HepG2 (cell line): ENCODE measurements at regions of chr4 and their contacts with region 1.

Region 1: GRCh38 chr4:25312496-25313200 is at the start of gene ZCCHC4:
- DNase-seq: peak; percentile 77
- ATAC-seq: peak; percentile 93
- H3K4me3 ChIP-seq: peak within 1 kb of the TSS; percentile 79 to 98 (median 96)
- H3K27ac ChIP-seq: peak within 1 kb of the TSS; percentile 92
- H3K4me1 ChIP-seq: peaks cover 46% of the 10 kb centered on the region
- H3K27me3 ChIP-seq: no peaks in the 10 kb centered on the region
- CTCF ChIP-seq: peak; percentile 99
- EP300 ChIP-seq: peak; percentile 57 to 60; a peak in 3 of 4 replicates
- POLR2A ChIP-seq: peak; percentile 79 to 85
- RAD21 ChIP-seq: peak; percentile 78
- total RNA-seq, gene ZCCHC4: 15.0 and 16.9 TPM in 2 replicates

Region 2: DNA sequence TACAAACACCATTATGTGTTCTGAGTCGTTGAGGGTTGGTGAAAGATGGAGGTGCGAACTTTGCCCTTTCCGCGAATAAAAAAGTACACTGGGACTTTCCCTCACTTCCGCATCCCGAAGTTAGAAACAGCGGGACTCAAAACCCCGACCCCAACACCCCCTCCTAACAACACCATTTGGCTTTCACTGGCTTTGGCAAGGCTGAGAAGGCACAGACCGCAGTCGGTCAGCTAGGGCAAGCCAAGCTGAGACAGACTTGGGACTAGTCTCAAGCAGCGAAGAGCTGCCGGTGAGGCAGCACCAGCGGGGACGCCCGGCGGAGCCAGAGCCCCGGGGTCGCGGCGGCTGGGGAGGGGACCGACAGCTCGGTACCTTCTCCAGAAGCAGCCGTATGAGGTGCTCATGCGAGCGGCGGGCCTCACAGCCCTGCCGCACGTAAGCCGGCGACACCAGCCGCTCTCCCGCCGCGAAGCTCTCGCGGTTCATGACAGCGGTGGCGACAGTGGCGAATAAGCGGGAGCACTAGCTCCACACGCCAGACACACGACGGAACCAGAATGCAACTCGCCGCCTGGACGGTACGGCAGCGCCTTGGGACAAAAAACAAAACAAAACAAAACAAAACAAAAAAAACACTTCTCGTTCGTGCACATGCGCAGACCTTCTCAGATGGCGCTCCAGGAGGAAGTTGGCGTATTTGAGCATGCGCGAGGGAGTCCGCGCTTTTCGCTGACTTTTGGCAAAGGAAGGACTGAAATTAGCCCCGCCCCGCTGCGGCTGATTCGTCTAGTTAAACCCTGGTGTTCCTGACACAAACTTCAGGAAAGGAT is 152.5 kb before region 1 on chr4 and contains the start of gene SEPSECS:
- CTCF ChIA-PET with region 1: no interaction called
- POLR2A ChIA-PET with region 1: interaction called, 12 read pairs
- in situ Hi-C with region 1: no loop called
- intact Hi-C with region 1: no loop called
- DNase-seq: peak; percentile 97
- ATAC-seq: peak; percentile 85
- H3K4me3 ChIP-seq: peak within 1 kb of the TSS; percentile 70 to 84 (median 79)
- H3K27ac ChIP-seq: peak within 1 kb of the TSS; percentile 99
- H3K4me1 ChIP-seq: peaks cover 58% of the 10 kb centered on the region
- H3K27me3 ChIP-seq: no peaks in the 10 kb centered on the region; a peak in 1 of 5 replicates
- CTCF ChIP-seq: peak; percentile 30
- EP300 ChIP-seq: peak in 1 of 2 experiments; percentile 29; a peak in 1 of 4 replicates
- POLR2A ChIP-seq: peak; percentile 81 to 91
- RAD21 ChIP-seq: 0 out of 2 replicates have a peak, but pooled peaks have one; percentile 25
- total RNA-seq, gene SEPSECS: 14.3 and 17.1 TPM in 2 replicates

Region 3: GRCh38 chr4:25180524-25181131 is 132.0 kb before region 1 on chr4:
- CTCF ChIA-PET with region 1: interaction called, 6 read pairs
- POLR2A ChIA-PET with region 1: no interaction called
- in situ Hi-C with region 1: no loop called
- intact Hi-C with region 1: loop called (anchors 2 kb)
- DNase-seq: peak; percentile 56
- ATAC-seq: peak; percentile 59
- H3K4me3 ChIP-seq: no peak overlapping the region
- H3K27ac ChIP-seq: no peak overlapping the region
- H3K4me1 ChIP-seq: peaks cover 52% of the 10 kb centered on the region
- H3K27me3 ChIP-seq: no peaks in the 10 kb centered on the region
- CTCF ChIP-seq: peak; percentile 68
- EP300 ChIP-seq: no peak
- POLR2A ChIP-seq: no peak
- RAD21 ChIP-seq: no peak; the same call in 1 of the 2 replicates

Region 4: DNA sequence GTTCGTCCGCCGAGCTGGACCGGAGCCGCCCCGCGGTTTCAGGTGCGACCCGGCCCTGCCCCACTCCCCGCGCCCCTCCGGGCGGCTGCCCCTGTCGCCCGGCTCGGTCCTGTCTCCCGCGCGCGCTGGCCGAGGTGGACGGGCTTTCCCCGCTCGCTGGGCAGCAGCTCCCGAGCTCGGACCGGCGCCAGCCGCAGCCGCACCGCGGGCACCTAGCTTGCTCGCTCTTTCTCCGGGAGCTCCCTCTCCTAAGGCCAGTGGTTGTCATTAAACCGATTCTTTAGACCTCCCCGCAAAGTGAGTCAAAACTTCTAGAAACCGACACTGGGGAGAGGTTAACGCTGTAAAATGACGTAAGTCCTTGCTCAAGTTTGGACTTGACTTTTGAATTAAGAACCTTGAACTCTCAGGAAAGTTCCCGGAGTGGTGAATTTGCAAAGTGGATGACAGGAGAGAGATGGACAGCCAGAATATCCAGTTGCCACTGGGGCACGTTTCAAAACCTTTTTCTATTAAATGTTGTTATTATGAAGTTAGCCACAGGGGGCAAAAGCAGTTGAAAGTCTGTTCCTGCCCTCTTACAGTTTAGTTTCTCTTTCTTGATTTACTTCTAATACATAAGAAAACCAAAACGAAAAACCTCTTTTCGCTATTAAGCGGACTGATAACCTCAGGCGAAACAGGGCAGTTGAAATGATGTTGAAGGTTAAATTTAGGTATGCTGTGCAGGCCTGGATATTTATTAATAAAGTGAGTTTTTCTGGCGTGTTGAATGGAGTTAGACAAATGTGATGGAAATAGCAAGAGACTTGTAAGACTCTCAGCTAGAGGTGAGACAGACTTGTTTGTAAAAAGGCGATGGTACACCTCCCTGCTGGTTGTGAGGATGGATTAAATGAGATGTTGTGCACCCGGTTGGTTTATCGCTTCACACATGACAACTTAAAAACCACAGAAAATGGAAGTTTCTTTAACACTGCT is 78.0 kb before region 1 on chr4:
- CTCF ChIA-PET with region 1: no interaction called
- POLR2A ChIA-PET with region 1: interaction called, 11 read pairs
- in situ Hi-C with region 1: loop called (anchors 5 kb)
- intact Hi-C with region 1: loop called (anchors 2 kb)
- DNase-seq: peak; percentile 89
- ATAC-seq: peak; percentile 79
- H3K4me3 ChIP-seq: peak overlapping the region; percentile 84 to 98 (median 91)
- H3K27ac ChIP-seq: peak overlapping the region; percentile 79
- H3K4me1 ChIP-seq: peaks cover 35% of the 10 kb centered on the region
- H3K27me3 ChIP-seq: no peaks in the 10 kb centered on the region; a peak in 1 of 5 replicates
- CTCF ChIP-seq: peak; percentile 33
- EP300 ChIP-seq: no peak
- POLR2A ChIP-seq: peak in 1 of 2 experiments; percentile 42; a peak in 1 of 4 replicates
- RAD21 ChIP-seq: no peak

Region 5: GRCh38 chr4:25367004-25367621 is 54.5 kb after region 1 on chr4:
- CTCF ChIA-PET with region 1: interaction called, 6 read pairs
- POLR2A ChIA-PET with region 1: interaction called, 6 read pairs
- in situ Hi-C with region 1: no loop called
- intact Hi-C with region 1: loop called (anchors 2 kb)
- DNase-seq: no peak
- ATAC-seq: no peak
- H3K4me3 ChIP-seq: no peak overlapping the region
- H3K27ac ChIP-seq: no peak overlapping the region
- H3K4me1 ChIP-seq: peaks cover 24% of the 10 kb centered on the region
- H3K27me3 ChIP-seq: no peaks in the 10 kb centered on the region
- CTCF ChIP-seq: peak; percentile 42
- EP300 ChIP-seq: no peak
- POLR2A ChIP-seq: no peak
- RAD21 ChIP-seq: no peak

Region 6: DNA sequence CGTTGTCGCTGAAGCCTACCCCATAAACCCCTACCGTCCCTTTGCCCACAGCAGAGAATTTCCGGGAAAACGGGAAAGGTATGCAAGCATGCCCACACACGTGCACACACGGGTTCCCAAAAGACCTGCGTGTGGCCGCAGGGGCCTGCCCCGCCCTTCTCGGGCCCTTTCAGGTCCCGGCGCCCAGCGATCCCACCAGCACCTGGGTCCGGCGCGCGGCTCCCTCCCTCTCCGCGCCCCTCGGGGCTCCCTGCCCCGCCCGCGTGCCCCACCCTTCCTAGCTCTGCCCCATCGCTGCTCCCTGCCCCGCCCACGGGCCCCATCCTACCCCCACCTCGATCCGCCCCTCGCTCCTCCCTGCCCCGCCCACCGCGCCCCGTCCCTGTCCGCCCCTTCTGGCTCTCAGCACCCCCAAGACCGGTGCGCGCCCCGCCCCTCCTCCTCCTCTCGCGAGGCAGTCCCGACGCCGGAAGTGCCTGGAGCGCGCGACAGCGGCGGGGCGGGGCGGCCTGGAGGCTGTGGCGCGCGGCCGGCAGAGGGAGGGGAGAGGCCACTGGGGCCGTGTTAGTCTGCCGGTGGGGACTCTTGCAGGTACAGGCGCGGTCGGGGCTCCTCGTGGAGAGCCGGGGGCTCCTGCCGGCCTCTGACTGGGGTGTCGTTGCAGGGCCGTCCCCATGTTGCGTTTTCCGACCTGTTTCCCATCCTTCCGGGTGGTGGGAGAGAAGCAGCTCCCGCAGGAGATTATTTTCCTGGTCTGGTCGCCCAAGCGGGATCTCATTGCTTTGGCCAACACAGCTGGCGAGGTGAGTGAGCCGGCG is 64.3 kb after region 1 on chr4 and contains the start of gene ANAPC4:
- CTCF ChIA-PET with region 1: no interaction called
- POLR2A ChIA-PET with region 1: interaction called, 10 read pairs
- in situ Hi-C with region 1: no loop called
- intact Hi-C with region 1: no loop called
- DNase-seq: peak; percentile 84
- ATAC-seq: peak; percentile 94
- H3K4me3 ChIP-seq: peak within 1 kb of the TSS; percentile 92 to 95 (median 95)
- H3K27ac ChIP-seq: peak within 1 kb of the TSS; percentile 70
- H3K4me1 ChIP-seq: peaks cover 68% of the 10 kb centered on the region
- H3K27me3 ChIP-seq: no peaks in the 10 kb centered on the region
- CTCF ChIP-seq: peak; percentile 14; the same call in 1 of the 2 replicates
- EP300 ChIP-seq: no peak
- POLR2A ChIP-seq: peak; percentile 85 to 87
- RAD21 ChIP-seq: peak; percentile 41; the same call in 1 of the 2 replicates
- total RNA-seq, gene ANAPC4: 29.4 and 30.2 TPM in 2 replicates